Activated CD8-positive, alpha-beta memory T cell treated with anti-CD3 and anti-CD28 coated beads, Interleukin-2, amount 10 ng/mL, durations not matched to agents 7 days and 5 days (primary cell): ENCODE measurements at regions of chr2 and their contacts with region 1.

Region 1: GRCh38 chr2:96509114-96509846 is 4.1 kb upstream of the NEURL3 start:
- DNase-seq: peak; percentile 69
- ATAC-seq: peak; percentile 35
- H3K4me3 Mint-ChIP-seq: no peak overlapping the region
- H3K27ac Mint-ChIP-seq: no peak overlapping the region
- H3K4me1 Mint-ChIP-seq: peaks cover 27% of the 10 kb centered on the region
- H3K27me3 Mint-ChIP-seq: no peaks in the 10 kb centered on the region

Region 2: DNA sequence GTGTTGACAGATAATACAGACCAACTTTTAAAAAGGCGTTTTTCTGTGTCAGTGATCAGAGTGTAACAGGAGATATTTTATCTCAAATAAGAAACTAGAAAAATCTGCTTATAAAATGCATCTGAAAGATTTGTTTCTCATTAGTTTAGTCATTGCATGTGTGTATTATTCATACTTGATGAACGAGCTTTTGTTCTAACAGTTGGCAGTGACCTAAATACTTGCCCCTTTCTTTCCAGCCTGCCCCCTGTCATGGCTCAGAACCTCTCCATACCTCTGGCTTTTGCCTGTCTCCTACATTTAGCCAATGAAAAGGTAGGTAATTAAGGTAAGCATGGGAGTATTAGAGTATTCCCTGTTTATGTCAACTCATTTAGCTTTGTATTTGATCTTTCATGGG is 140.1 kb before region 1 on chr2:
- CTCF ChIA-PET with region 1: interaction called, 12 read pairs
- DNase-seq: no peak
- ATAC-seq: no peak
- H3K4me3 Mint-ChIP-seq: no peak overlapping the region
- H3K27ac Mint-ChIP-seq: peak overlapping the region; percentile 16
- H3K4me1 Mint-ChIP-seq: no peaks in the 10 kb centered on the region
- H3K27me3 Mint-ChIP-seq: no peaks in the 10 kb centered on the region

Region 3: DNA sequence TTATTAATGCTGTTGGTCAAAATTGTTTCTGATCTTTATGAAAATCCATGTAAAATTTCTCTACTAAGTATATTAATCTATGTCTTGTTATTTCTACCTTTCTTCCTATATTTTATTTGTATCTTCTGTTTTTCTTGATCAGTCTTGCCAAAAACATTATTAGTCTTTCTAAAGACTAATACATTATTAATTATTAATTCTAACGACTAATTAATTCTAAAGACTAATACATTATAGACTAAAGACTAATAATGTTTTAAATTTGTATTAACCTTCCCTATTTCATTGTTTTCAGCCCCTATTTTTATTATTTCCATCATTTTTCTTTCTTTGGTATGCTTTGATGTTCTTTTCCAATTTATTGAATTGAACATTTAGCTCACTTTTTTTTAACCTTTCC is 31.8 kb before region 1 on chr2:
- CTCF ChIA-PET with region 1: interaction called, 10 read pairs
- DNase-seq: no peak
- ATAC-seq: no peak
- H3K4me3 Mint-ChIP-seq: no peak overlapping the region
- H3K27ac Mint-ChIP-seq: no peak overlapping the region
- H3K4me1 Mint-ChIP-seq: no peaks in the 10 kb centered on the region
- H3K27me3 Mint-ChIP-seq: peaks cover 36% of the 10 kb centered on the region

Region 4: DNA sequence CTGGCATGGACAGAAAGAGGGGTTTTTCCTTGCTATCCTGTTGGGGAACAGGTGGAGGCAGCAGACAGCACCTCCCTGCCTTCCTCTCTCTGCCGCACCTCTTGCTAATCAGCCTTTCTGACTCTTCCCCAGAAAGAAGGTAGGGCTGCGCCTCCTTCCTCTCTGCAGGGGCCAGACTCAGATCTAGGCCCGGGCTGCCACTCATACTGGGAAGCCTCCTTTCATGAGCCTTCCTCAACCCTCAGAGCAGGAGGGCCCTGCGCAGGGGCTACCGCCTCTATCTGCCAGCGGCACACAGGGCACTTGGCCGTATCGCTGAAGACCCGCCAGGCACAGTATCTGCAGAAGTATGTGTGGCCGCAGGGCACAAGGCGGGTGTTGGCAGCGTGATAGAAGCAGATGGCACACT is 11.3 kb before region 1 on chr2:
- CTCF ChIA-PET with region 1: interaction called, 38 read pairs
- DNase-seq: no peak
- ATAC-seq: no peak
- H3K4me3 Mint-ChIP-seq: no peak overlapping the region
- H3K27ac Mint-ChIP-seq: no peak overlapping the region
- H3K4me1 Mint-ChIP-seq: peaks cover 46% of the 10 kb centered on the region
- H3K27me3 Mint-ChIP-seq: no peaks in the 10 kb centered on the region

Region 5: GRCh38 chr2:96527286-96528005 is 18.2 kb after region 1 on chr2:
- CTCF ChIA-PET with region 1: interaction called, 31 read pairs
- DNase-seq: peak; percentile 88
- ATAC-seq: peak; percentile 43
- H3K4me3 Mint-ChIP-seq: peak overlapping the region; percentile 65
- H3K27ac Mint-ChIP-seq: peak overlapping the region; percentile 88
- H3K4me1 Mint-ChIP-seq: peaks cover 94% of the 10 kb centered on the region
- H3K27me3 Mint-ChIP-seq: no peaks in the 10 kb centered on the region

Region 6: DNA sequence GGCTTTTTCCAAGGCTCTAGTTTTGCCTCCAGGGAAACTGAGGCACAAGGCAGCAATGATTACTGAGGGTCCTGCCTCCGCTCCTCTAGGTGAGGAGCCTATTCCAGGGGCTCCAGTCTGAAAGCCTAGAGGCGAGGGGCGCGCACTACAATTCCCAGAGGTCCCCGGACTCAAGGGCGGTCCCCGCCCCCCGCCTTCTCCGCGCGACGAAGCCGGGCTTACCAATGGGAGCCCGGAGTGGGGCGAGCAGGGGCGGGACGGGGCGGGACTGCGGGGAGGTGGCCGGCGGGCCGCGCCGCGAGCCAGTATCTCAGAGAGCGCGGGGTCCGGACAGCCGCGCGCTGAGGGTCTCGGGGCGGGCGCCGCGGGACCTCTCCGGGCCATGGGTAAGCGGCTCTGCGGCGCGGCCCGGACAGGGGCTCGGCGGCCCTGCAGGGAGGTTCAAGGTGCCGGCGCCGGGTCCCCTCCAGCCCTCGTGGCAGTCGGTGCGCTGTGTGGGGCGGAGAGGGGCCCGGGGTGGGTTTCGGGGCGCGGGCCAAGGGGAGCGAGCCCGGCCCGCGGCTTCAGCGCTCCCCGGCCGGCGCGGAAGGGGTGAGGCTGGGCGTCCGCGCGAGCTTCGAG is 27.3 kb after region 1 on chr2 and contains the start of gene ARID5A:
- CTCF ChIA-PET with region 1: interaction called, 29 read pairs
- DNase-seq: peak; percentile 95
- ATAC-seq: peak; percentile 73
- H3K4me3 Mint-ChIP-seq: peak within 1 kb of the TSS; percentile 90
- H3K27ac Mint-ChIP-seq: peak within 1 kb of the TSS; percentile 94
- H3K4me1 Mint-ChIP-seq: peaks cover 70% of the 10 kb centered on the region
- H3K27me3 Mint-ChIP-seq: no peaks in the 10 kb centered on the region
- total RNA-seq, gene ARID5A: 57.9 to 70.5 TPM